HEK293T (cell line): ENCODE measurements at regions of chr12 and their contacts with region 1.

Region 1: GRCh38 chr12:50314629-50315312 is 31.5 kb upstream of the LIMA1 start:
- DNase-seq: peak; percentile 68

Region 2: GRCh38 chr12:50182461-50182860 is 132.3 kb before region 1 on chr12:
- CTCF ChIA-PET with region 1: interaction called, 12 read pairs
- POLR2A ChIA-PET with region 1: no interaction called
- DNase-seq: no peak

Region 3: DNA sequence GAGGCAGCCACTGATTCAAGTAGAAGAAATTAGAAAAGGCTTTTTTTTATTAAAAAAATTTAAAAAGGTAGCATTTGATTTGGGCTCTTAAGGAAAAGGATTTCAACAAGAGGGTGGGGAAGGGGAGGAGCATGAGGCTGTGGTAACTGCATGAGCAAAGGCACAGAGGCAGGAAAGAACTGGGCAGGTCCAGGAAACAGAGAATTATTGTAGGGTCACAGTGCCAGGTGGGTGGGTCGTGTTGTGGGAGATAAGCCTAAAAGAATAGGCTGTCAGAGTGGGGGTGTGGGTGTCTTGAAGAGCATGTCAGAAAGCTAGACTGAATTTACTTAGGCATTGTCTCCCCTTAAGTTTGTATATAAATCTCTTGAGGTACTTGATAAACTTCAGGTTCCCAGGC is 39.2 kb before region 1 on chr12:
- CTCF ChIA-PET with region 1: no interaction called
- POLR2A ChIA-PET with region 1: no interaction called
- DNase-seq: no peak